Activated naive CD4-positive, alpha-beta T cell treated with anti-CD3 and anti-CD28 coated beads for 36 hours (primary cell): ENCODE measurements at regions of chr22 and their contacts with region 1.

Region 1: GRCh38 chr22:28800308-28801077 is at the start of gene XBP1:
- DNase-seq: peak; percentile 90
- H3K4me3 Mint-ChIP-seq: peak within 1 kb of the TSS; percentile 89
- H3K27ac Mint-ChIP-seq: peak within 1 kb of the TSS; percentile 97
- H3K4me1 Mint-ChIP-seq: peaks cover 42% of the 10 kb centered on the region
- H3K27me3 Mint-ChIP-seq: no peaks in the 10 kb centered on the region
- total RNA-seq, gene XBP1: 106 to 108 TPM

Region 2: GRCh38 chr22:27880778-27881394 is 919.6 kb before region 1 on chr22:
- CTCF ChIA-PET with region 1: no interaction called
- intact Hi-C with region 1: no loop called
- DNase-seq: peak; percentile 29
- H3K4me3 Mint-ChIP-seq: no peak overlapping the region
- H3K27ac Mint-ChIP-seq: no peak overlapping the region
- H3K4me1 Mint-ChIP-seq: peaks cover 28% of the 10 kb centered on the region
- H3K27me3 Mint-ChIP-seq: no peaks in the 10 kb centered on the region

Region 3: GRCh38 chr22:27919222-27919941 is 881.1 kb before region 1 on chr22 and contains the start of gene PITPNB:
- CTCF ChIA-PET with region 1: no interaction called
- intact Hi-C with region 1: loop called (anchors 5 kb)
- DNase-seq: peak; percentile 98
- H3K4me3 Mint-ChIP-seq: peak within 1 kb of the TSS; percentile 96
- H3K27ac Mint-ChIP-seq: peak within 1 kb of the TSS; percentile 96
- H3K4me1 Mint-ChIP-seq: peaks cover 61% of the 10 kb centered on the region
- H3K27me3 Mint-ChIP-seq: no peaks in the 10 kb centered on the region
- total RNA-seq, gene PITPNB: 76.4 to 78.7 TPM

Region 4: GRCh38 chr22:28772633-28773460 is 27.6 kb before region 1 on chr22 and contains the start of gene CCDC117:
- CTCF ChIA-PET with region 1: interaction called, 5 read pairs
- intact Hi-C with region 1: loop called (anchors 1 kb)
- DNase-seq: peak; percentile 97
- H3K4me3 Mint-ChIP-seq: peak within 1 kb of the TSS; percentile 99
- H3K27ac Mint-ChIP-seq: peak within 1 kb of the TSS; percentile 98
- H3K4me1 Mint-ChIP-seq: peaks cover 29% of the 10 kb centered on the region
- H3K27me3 Mint-ChIP-seq: no peaks in the 10 kb centered on the region
- total RNA-seq, gene CCDC117: 28.2 to 28.6 TPM

Region 5: GRCh38 chr22:28810821-28811491 is 10.5 kb after region 1 on chr22:
- CTCF ChIA-PET with region 1: interaction called, 13 read pairs
- intact Hi-C with region 1: loop called (anchors 1 kb)
- DNase-seq: peak; percentile 66
- H3K4me3 Mint-ChIP-seq: peak overlapping the region; percentile 54
- H3K27ac Mint-ChIP-seq: peak overlapping the region; percentile 53
- H3K4me1 Mint-ChIP-seq: peaks cover 61% of the 10 kb centered on the region
- H3K27me3 Mint-ChIP-seq: no peaks in the 10 kb centered on the region

Region 6: DNA sequence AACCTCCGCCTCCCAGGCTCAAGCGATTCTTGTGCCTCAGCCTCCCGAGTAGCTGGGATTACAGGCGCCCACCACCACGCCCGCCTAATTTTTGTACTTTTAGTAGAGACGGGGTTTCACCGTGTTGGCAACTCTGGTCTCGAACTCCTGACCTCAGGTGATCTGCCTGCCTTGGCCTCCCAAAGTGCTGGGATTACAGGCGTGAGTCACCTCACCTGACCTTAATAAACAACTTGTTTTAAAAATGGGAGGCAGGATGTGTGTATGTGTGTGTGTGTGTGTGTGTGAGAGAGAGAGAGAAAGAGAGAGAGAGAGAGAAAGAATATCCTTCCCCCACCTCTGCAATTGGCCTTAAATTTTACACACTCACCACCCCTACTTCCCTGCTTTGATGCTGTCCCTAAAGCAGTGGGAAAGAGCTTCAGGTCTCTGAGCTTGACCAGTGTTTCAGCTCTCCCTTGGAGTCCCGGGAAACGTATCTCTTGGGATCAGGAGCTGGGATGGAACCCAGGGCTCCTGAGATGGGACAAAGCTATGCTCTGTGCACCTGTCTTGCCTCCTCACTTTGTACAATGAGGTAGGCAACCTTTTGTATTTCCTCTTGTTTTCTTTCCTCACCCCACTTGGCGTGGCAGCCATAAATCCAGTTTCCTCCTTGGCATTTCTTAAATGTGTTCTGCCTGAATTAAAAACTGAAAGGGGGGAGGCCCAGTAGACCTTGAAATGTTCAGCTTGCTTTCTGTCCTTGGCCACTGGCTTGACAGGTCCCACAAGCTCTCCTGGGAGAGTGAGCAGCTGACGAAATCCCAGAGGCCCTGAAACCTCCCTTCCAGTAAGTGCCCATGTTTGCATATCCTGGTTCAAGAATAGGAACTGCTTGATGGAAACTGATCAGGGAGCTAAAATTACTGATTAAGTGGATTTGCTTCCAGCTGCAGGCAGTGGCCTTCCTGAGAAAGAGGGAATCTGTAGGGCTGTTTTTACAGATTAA is 17.7 kb after region 1 on chr22:
- CTCF ChIA-PET with region 1: interaction called, 13 read pairs
- intact Hi-C with region 1: no loop called
- DNase-seq: peak; percentile 54
- H3K4me3 Mint-ChIP-seq: no peak overlapping the region
- H3K27ac Mint-ChIP-seq: peak overlapping the region; percentile 30
- H3K4me1 Mint-ChIP-seq: peaks cover 71% of the 10 kb centered on the region
- H3K27me3 Mint-ChIP-seq: no peaks in the 10 kb centered on the region

Region 7: GRCh38 chr22:28829358-28830181 is 29.1 kb after region 1 on chr22:
- CTCF ChIA-PET with region 1: interaction called, 16 read pairs
- intact Hi-C with region 1: loop called (anchors 1 kb)
- DNase-seq: peak; percentile 86
- H3K4me3 Mint-ChIP-seq: no peak overlapping the region
- H3K27ac Mint-ChIP-seq: no peak overlapping the region
- H3K4me1 Mint-ChIP-seq: peaks cover 10% of the 10 kb centered on the region
- H3K27me3 Mint-ChIP-seq: no peaks in the 10 kb centered on the region

Region 8: GRCh38 chr22:28907311-28908008 is 107.0 kb after region 1 on chr22:
- CTCF ChIA-PET with region 1: interaction called, 13 read pairs
- intact Hi-C with region 1: loop called (anchors 1 kb)
- DNase-seq: peak; percentile 83
- H3K4me3 Mint-ChIP-seq: no peak overlapping the region
- H3K27ac Mint-ChIP-seq: peak overlapping the region; percentile 86
- H3K4me1 Mint-ChIP-seq: peaks cover 46% of the 10 kb centered on the region
- H3K27me3 Mint-ChIP-seq: peaks cover 27% of the 10 kb centered on the region